Mammary epithelial cell (primary cell): ENCODE measurements at regions of chr6 and their contacts with region 1.

Region 1: GRCh38 chr6:72411872-72412708 is 209.8 kb upstream of the KCNQ5 start:
- DNase-seq: peak; percentile 60
- H3K4me3 ChIP-seq: no peak overlapping the region
- H3K27ac ChIP-seq: no peak overlapping the region
- H3K4me1 ChIP-seq: no peaks in the 10 kb centered on the region
- H3K27me3 ChIP-seq: no peaks in the 10 kb centered on the region
- CTCF ChIP-seq: peak; percentile 100

Region 2: GRCh38 chr6:72094506-72094905 is 317.6 kb before region 1 on chr6:
- CTCF ChIA-PET with region 1: no interaction called
- dilution Hi-C with region 1: no loop called
- in situ Hi-C with region 1: no loop called
- intact Hi-C with region 1: no loop called
- DNase-seq: no peak
- H3K4me3 ChIP-seq: no peak overlapping the region
- H3K27ac ChIP-seq: no peak overlapping the region
- H3K4me1 ChIP-seq: no peaks in the 10 kb centered on the region
- H3K27me3 ChIP-seq: peaks cover 2% of the 10 kb centered on the region
- CTCF ChIP-seq: no peak

Region 3: DNA sequence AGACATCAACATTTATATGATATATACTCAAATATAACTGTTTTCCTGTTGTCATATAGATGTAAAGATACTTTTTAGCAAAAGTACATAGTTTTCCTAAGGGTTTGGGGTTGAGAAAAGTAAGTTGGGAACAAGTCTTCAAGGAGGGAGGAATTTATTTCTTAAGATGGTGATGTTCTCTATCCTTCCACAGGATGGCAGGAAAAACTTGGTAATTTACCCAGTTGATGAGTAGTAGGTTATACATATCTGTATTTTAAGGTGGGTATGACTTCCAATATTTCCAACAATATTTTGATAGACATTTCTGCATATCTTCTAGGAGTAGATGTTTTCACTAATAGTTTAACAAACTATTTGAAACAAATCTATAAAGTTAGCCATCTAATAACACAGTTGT is 271.3 kb before region 1 on chr6:
- CTCF ChIA-PET with region 1: no interaction called
- dilution Hi-C with region 1: no loop called
- in situ Hi-C with region 1: loop called in 1 of 2 experiments (anchors 25 kb)
- intact Hi-C with region 1: loop called (anchors 1 kb)
- DNase-seq: peak; percentile 11
- H3K4me3 ChIP-seq: no peak overlapping the region
- H3K27ac ChIP-seq: no peak overlapping the region
- H3K4me1 ChIP-seq: no peaks in the 10 kb centered on the region
- H3K27me3 ChIP-seq: no peaks in the 10 kb centered on the region
- CTCF ChIP-seq: peak; percentile 32 to 46

Region 4: GRCh38 chr6:72553531-72554511 is 141.7 kb after region 1 on chr6:
- CTCF ChIA-PET with region 1: interaction called, 9 read pairs
- dilution Hi-C with region 1: no loop called
- in situ Hi-C with region 1: no loop called
- intact Hi-C with region 1: loop called (anchors 1 kb)
- DNase-seq: peak; percentile 91
- H3K4me3 ChIP-seq: peak overlapping the region in 2 of 3 experiments; percentile 18 to 19
- H3K27ac ChIP-seq: peak overlapping the region; percentile 98
- H3K4me1 ChIP-seq: peaks cover 31% of the 10 kb centered on the region
- H3K27me3 ChIP-seq: no peaks in the 10 kb centered on the region
- CTCF ChIP-seq: no peak

Region 5: GRCh38 chr6:72622094-72622940 is 210.2 kb after region 1 on chr6:
- CTCF ChIA-PET with region 1: no interaction called
- dilution Hi-C with region 1: no loop called
- in situ Hi-C with region 1: no loop called
- intact Hi-C with region 1: loop called (anchors 1 kb)
- DNase-seq: peak; percentile 46
- H3K4me3 ChIP-seq: peak overlapping the region; percentile 65 to 72 (median 72)
- H3K27ac ChIP-seq: peak overlapping the region; percentile 50
- H3K4me1 ChIP-seq: peaks cover 21% of the 10 kb centered on the region
- H3K27me3 ChIP-seq: no peaks in the 10 kb centered on the region
- CTCF ChIP-seq: peak in 1 of 2 donors; percentile 35

Region 6: GRCh38 chr6:73180763-73181619 is 768.9 kb after region 1 on chr6:
- CTCF ChIA-PET with region 1: no interaction called
- dilution Hi-C with region 1: no loop called
- in situ Hi-C with region 1: loop called (anchors 10 to 25 kb)
- intact Hi-C with region 1: loop called (anchors 1 kb)
- DNase-seq: peak; percentile 59
- H3K4me3 ChIP-seq: no peak overlapping the region
- H3K27ac ChIP-seq: no peak overlapping the region
- H3K4me1 ChIP-seq: no peaks in the 10 kb centered on the region
- H3K27me3 ChIP-seq: no peaks in the 10 kb centered on the region
- CTCF ChIP-seq: peak; percentile 90 to 91